ENCODE measurements at regions of chr18 and their contacts with region 1.

Region 1: GRCh38 chr18:23503038-23503962 is at the start of gene RMC1:
- DNase-seq: peak; percentile 66
- ATAC-seq: peak; percentile 86
- H3K4me3 ChIP-seq: peak within 1 kb of the TSS; percentile 96
- H3K27ac ChIP-seq: peak within 1 kb of the TSS; percentile 94
- H3K4me1 ChIP-seq: peaks cover 18% of the 10 kb centered on the region
- H3K27me3 ChIP-seq: no peaks in the 10 kb centered on the region
- CTCF ChIP-seq: peak; percentile 20 to 38 (median 37); a peak in 5 of 6 replicates
- EP300 ChIP-seq: peak in 1 of 2 experiments; percentile 31; a peak in 1 of 4 replicates
- POLR2A ChIP-seq: peak; percentile 93
- RAD21 ChIP-seq: peak; percentile 41; the same call in 1 of the 2 replicates
- polyA plus RNA-seq, gene RMC1: 8.4 to 25.7 TPM

Region 2: GRCh38 chr18:23131693-23132319 is 371.5 kb before region 1 on chr18:
- CTCF ChIA-PET with region 1: interaction called, 9 read pairs
- POLR2A ChIA-PET with region 1: interaction called, 11 read pairs
- RAD21 ChIA-PET with region 1: interaction called, 7 read pairs
- SMC1A ChIA-PET with region 1: interaction called, 3 read pairs
- in situ Hi-C with region 1: no loop called
- intact Hi-C with region 1: loop called (anchors 2 kb)
- DNase-seq: peak; percentile 58
- ATAC-seq: peak; percentile 44
- H3K4me3 ChIP-seq: no peak overlapping the region
- H3K27ac ChIP-seq: no peak overlapping the region
- H3K4me1 ChIP-seq: peaks cover 18% of the 10 kb centered on the region
- H3K27me3 ChIP-seq: no peaks in the 10 kb centered on the region
- CTCF ChIP-seq: peak; percentile 64 to 82 (median 67)
- EP300 ChIP-seq: no peak
- POLR2A ChIP-seq: no peak
- RAD21 ChIP-seq: peak; percentile 89

Region 3: GRCh38 chr18:23405631-23406030 is 97.7 kb before region 1 on chr18:
- CTCF ChIA-PET with region 1: no interaction called
- POLR2A ChIA-PET with region 1: no interaction called
- RAD21 ChIA-PET with region 1: no interaction called
- SMC1A ChIA-PET with region 1: no interaction called
- in situ Hi-C with region 1: no loop called
- intact Hi-C with region 1: no loop called
- DNase-seq: no peak
- ATAC-seq: no peak
- H3K4me3 ChIP-seq: no peak overlapping the region
- H3K27ac ChIP-seq: no peak overlapping the region
- H3K4me1 ChIP-seq: no peaks in the 10 kb centered on the region
- H3K27me3 ChIP-seq: no peaks in the 10 kb centered on the region
- CTCF ChIP-seq: no peak
- EP300 ChIP-seq: no peak
- POLR2A ChIP-seq: no peak
- RAD21 ChIP-seq: no peak

Region 4: GRCh38 chr18:23422672-23423418 is 80.5 kb before region 1 on chr18:
- CTCF ChIA-PET with region 1: interaction called, 17 read pairs
- POLR2A ChIA-PET with region 1: no interaction called
- RAD21 ChIA-PET with region 1: interaction called, 5 read pairs
- SMC1A ChIA-PET with region 1: interaction called, 13 read pairs
- in situ Hi-C with region 1: no loop called
- intact Hi-C with region 1: loop called (anchors 2 kb)
- DNase-seq: peak; percentile 92
- ATAC-seq: peak; percentile 96
- H3K4me3 ChIP-seq: peak overlapping the region; percentile 55; the same call in 1 of the 2 replicates
- H3K27ac ChIP-seq: peak overlapping the region; percentile 62
- H3K4me1 ChIP-seq: peaks cover 24% of the 10 kb centered on the region
- H3K27me3 ChIP-seq: no peaks in the 10 kb centered on the region
- CTCF ChIP-seq: peak in 2 of 3 experiments; percentile 26 to 27; a peak in 2 of 6 replicates
- EP300 ChIP-seq: peak; percentile 85 to 95
- POLR2A ChIP-seq: no peak
- RAD21 ChIP-seq: 0 out of 2 replicates have a peak, but pooled peaks have one; percentile 24

Region 5: DNA sequence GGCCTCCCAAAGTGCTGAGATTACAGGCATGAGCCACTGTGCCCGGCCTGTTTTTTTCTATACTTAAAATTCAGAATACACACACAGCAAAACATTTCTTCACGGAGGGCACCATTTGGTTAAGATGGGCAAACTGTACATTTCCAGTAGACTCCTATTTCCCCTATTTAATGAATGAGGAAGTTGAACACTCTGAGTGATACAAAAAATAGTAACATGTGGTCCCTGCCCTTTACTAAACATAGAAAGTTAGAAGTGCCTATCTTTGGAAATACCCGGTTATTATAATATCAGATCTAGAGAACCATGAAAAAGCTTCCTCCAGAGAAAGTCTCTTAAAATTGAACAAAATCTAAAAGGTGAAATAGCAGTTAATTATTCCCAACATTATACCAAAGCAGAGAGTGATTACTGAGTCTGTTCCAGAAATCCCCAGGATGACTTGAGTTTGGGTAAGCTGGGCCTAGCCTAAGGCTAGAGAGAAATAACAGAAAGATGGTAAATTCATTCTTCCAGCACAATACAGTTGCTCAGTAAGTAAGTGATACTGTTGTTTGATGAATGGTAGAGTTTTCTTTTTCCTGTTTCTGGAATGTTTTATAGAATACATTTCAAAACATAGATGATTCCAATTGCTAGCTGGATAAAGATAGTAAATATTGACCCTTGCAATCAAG is 23.3 kb before region 1 on chr18:
- CTCF ChIA-PET with region 1: interaction called, 34 read pairs
- POLR2A ChIA-PET with region 1: interaction called, 4 read pairs
- RAD21 ChIA-PET with region 1: interaction called, 8 read pairs
- SMC1A ChIA-PET with region 1: interaction called, 6 read pairs
- in situ Hi-C with region 1: no loop called
- intact Hi-C with region 1: no loop called
- DNase-seq: no peak
- ATAC-seq: peak; percentile 90
- H3K4me3 ChIP-seq: peak overlapping the region; percentile 29; the same call in 1 of the 2 replicates
- H3K27ac ChIP-seq: peak overlapping the region; percentile 73
- H3K4me1 ChIP-seq: peaks cover 19% of the 10 kb centered on the region
- H3K27me3 ChIP-seq: no peaks in the 10 kb centered on the region
- CTCF ChIP-seq: no peak
- EP300 ChIP-seq: no peak
- POLR2A ChIP-seq: no peak
- RAD21 ChIP-seq: no peak

Region 6: GRCh38 chr18:23586249-23587196 is 83.2 kb after region 1 on chr18 and contains the start of gene NPC1:
- CTCF ChIA-PET with region 1: interaction called, 17 read pairs
- POLR2A ChIA-PET with region 1: interaction called, 9 read pairs
- RAD21 ChIA-PET with region 1: interaction called, 8 read pairs
- SMC1A ChIA-PET with region 1: interaction called, 4 read pairs
- in situ Hi-C with region 1: no loop called
- intact Hi-C with region 1: loop called (anchors 2 kb)
- DNase-seq: peak; percentile 67
- ATAC-seq: peak; percentile 95
- H3K4me3 ChIP-seq: peak within 1 kb of the TSS; percentile 91
- H3K27ac ChIP-seq: peak within 1 kb of the TSS; percentile 96
- H3K4me1 ChIP-seq: peaks cover 7% of the 10 kb centered on the region; the same call in 1 of the 2 replicates
- H3K27me3 ChIP-seq: no peaks in the 10 kb centered on the region
- CTCF ChIP-seq: peak; percentile 81 to 88 (median 85)
- EP300 ChIP-seq: no peak
- POLR2A ChIP-seq: peak; percentile 93
- RAD21 ChIP-seq: peak; percentile 65
- polyA plus RNA-seq, gene NPC1: 10.1 to 11.0 TPM

Region 7: GRCh38 chr18:24014062-24014985 is 511.0 kb after region 1 on chr18 and contains the start of gene TTC39C:
- CTCF ChIA-PET with region 1: no interaction called
- POLR2A ChIA-PET with region 1: no interaction called
- RAD21 ChIA-PET with region 1: no interaction called
- SMC1A ChIA-PET with region 1: no interaction called
- in situ Hi-C with region 1: no loop called
- intact Hi-C with region 1: loop called (anchors 5 kb)
- DNase-seq: no peak
- ATAC-seq: peak; percentile 66
- H3K4me3 ChIP-seq: peak within 1 kb of the TSS; percentile 88
- H3K27ac ChIP-seq: peak within 1 kb of the TSS; percentile 86
- H3K4me1 ChIP-seq: peaks cover 61% of the 10 kb centered on the region
- H3K27me3 ChIP-seq: no peaks in the 10 kb centered on the region
- CTCF ChIP-seq: no peak
- EP300 ChIP-seq: peak in 1 of 2 experiments; percentile 18; a peak in 1 of 4 replicates
- POLR2A ChIP-seq: peak; percentile 81
- RAD21 ChIP-seq: no peak
- polyA plus RNA-seq, gene TTC39C: 21.1 to 37.2 TPM

Measured in GM12878 (cell line).